ENCODE measurements at regions of chr10 and their contacts with region 1.

Region 1: GRCh38 chr10:21495752-21496342 is 29.6 kb downstream of the SKIDA1 start:
- H3K4me3 Mint-ChIP-seq: peak overlapping the region; percentile 81
- H3K27ac Mint-ChIP-seq: no peak overlapping the region
- H3K4me1 Mint-ChIP-seq: peaks cover 30% of the 10 kb centered on the region
- H3K27me3 Mint-ChIP-seq: peaks cover 76% of the 10 kb centered on the region

Region 2: DNA sequence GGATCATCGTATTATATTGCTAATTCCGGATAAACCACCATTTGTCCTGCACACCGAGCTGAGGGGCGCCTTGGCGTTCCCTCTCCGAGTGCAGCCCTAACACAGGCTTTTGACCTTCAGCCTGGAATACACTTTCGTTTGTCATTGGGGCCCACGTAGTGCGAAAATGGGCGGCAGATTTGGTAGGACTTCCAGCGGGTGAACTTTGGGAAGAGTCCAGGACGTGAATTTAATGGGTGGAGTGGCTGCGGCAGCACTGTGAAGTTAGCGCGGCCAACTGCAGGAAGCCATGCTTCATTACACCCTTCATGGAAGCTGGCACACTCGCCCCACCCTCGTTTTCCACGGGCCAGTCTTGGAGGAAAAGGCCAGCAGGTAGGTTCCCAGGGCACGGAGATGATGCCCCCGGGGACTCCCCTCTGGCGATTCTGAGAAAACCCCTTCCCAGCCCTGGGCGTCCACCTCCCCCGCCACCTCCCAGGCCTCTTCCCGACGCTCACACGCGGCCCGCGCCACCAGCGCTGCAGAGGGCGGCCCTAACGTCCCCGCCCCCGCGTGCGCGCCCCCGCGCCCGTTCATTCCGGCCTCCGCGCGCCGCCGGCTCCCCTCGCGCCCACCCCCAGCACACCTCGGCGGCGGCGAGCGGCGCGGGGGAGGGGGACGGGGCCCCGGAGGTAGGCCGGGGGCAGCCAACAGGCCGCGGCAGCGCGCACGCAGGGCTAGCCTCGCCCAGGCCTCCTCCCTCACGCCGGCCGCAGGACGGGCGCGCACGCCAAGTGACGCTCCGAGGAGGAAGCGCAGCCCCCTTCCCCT is 37.8 kb after region 1 on chr10 and contains the start of gene MLLT10:
- intact Hi-C with region 1: loop called (anchors 5 kb)
- H3K4me3 Mint-ChIP-seq: peak within 1 kb of the TSS; percentile 86
- H3K27ac Mint-ChIP-seq: peak within 1 kb of the TSS; percentile 100
- H3K4me1 Mint-ChIP-seq: peaks cover 24% of the 10 kb centered on the region
- H3K27me3 Mint-ChIP-seq: no peaks in the 10 kb centered on the region

Region 3: DNA sequence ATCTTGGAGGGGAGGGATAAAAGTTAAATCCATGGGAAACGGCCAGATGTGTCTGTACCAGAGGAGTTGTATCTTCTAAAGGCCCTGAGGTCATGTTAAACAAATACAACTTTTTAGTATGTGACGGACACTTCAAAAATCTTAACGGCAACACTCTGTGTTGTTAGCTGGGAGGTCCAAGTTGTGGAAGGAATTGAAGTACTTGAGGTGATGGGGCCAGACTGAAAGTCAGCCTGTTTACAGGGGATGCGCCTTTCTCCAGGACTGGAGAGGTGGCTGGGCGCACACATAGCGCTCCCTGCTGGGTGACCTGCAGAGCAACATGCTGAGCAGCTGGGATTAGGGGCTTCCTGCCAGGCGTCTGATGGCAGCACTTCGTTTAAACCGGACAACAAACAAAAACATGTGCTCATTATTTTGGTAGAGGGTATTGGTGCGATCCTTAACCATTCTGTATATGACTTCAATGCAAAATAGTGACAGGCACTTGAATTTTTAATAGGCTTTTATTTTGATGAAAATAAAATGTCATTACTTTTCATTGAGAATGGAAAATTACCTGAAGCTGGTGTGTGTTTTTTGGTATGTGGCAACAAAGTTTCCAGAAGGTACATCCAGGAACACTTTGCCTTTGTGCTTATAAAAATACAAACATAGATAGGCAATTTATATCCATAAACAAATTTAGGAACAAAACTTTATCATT is 236.4 kb after region 1 on chr10:
- intact Hi-C with region 1: loop called (anchors 5 kb)
- H3K4me3 Mint-ChIP-seq: no peak overlapping the region
- H3K27ac Mint-ChIP-seq: no peak overlapping the region
- H3K4me1 Mint-ChIP-seq: peaks cover 7% of the 10 kb centered on the region
- H3K27me3 Mint-ChIP-seq: no peaks in the 10 kb centered on the region

Region 4: GRCh38 chr10:22003079-22003913 is 507.4 kb after region 1 on chr10 and contains the start of gene DNAJC1:
- intact Hi-C with region 1: loop called (anchors 5 kb)
- H3K4me3 Mint-ChIP-seq: peak within 1 kb of the TSS; percentile 90
- H3K27ac Mint-ChIP-seq: peak within 1 kb of the TSS; percentile 87
- H3K4me1 Mint-ChIP-seq: peaks cover 23% of the 10 kb centered on the region
- H3K27me3 Mint-ChIP-seq: no peaks in the 10 kb centered on the region

Measured in dendritic cell treated with granulocyte-macrophage colony-stimulating factor and Interleukin-4, amounts not matched to agents 40 ng/mL and 50 ng/mL, for 4 days (primary cell).